Activated CD4-positive, alpha-beta memory T cell treated with anti-CD3 and anti-CD28 coated beads for 36 hours (primary cell): ENCODE measurements at regions of chr20 and their contacts with region 1.

Region 1: GRCh38 chr20:58192567-58192966 is 35.9 kb downstream of the ANKRD60 start:
- DNase-seq: peak; percentile 49
- H3K4me3 Mint-ChIP-seq: no peak overlapping the region
- H3K27ac Mint-ChIP-seq: no peak overlapping the region
- H3K4me1 Mint-ChIP-seq: no peaks in the 10 kb centered on the region
- H3K27me3 Mint-ChIP-seq: peaks cover 11% of the 10 kb centered on the region

Region 2: GRCh38 chr20:58209652-58210397 is 17.3 kb after region 1 on chr20:
- CTCF ChIA-PET with region 1: interaction called, 20 read pairs
- POLR2A ChIA-PET with region 1: no interaction called
- intact Hi-C with region 1: loop called (anchors 1 kb)
- DNase-seq: peak; percentile 89
- H3K4me3 Mint-ChIP-seq: no peak overlapping the region
- H3K27ac Mint-ChIP-seq: no peak overlapping the region
- H3K4me1 Mint-ChIP-seq: no peaks in the 10 kb centered on the region
- H3K27me3 Mint-ChIP-seq: peaks cover 3% of the 10 kb centered on the region

Region 3: DNA sequence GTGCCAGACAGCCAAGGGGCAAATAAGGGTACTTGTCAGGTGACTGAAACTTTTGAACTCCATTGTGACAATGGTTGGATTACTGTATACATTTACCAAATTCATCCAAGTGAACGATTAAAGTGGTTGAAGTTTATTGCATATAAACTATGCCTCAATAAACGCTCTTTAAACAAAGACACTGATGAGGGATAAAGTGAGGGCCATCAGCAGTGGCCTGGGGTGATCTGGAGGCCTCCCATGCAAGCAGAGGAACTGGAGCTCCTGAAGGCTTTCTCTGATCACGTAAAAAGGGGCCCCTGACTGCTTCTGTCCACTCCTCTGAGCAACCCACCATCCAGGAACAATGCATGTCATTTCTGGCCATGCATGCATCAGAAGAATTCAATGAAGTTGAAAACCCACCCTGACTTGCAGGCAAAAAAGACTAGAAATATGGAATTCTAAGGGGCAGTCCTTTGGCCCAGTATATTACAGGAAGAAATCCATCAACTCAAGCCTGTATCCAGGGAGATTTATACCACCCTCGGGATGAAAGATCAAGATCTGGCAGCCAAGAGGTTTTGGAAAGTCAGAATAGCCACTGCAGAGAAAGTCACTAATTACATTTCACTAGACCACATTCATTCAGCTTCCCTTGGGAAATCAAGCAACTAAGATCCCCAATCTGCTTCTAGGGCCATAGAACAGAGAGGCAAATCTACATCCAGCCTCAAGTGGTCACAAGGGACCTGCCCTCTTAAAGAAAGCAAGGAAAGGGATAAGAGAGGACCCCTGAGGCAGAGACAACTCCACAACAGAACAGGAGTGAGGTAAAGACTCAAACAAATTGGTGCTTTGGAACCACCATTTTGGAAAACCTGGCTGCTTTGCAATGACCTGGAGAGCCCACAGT is 85.3 kb after region 1 on chr20:
- CTCF ChIA-PET with region 1: no interaction called
- POLR2A ChIA-PET with region 1: no interaction called
- intact Hi-C with region 1: no loop called
- DNase-seq: no peak
- H3K4me3 Mint-ChIP-seq: no peak overlapping the region
- H3K27ac Mint-ChIP-seq: no peak overlapping the region
- H3K4me1 Mint-ChIP-seq: peaks cover 2% of the 10 kb centered on the region
- H3K27me3 Mint-ChIP-seq: no peaks in the 10 kb centered on the region

Region 4: DNA sequence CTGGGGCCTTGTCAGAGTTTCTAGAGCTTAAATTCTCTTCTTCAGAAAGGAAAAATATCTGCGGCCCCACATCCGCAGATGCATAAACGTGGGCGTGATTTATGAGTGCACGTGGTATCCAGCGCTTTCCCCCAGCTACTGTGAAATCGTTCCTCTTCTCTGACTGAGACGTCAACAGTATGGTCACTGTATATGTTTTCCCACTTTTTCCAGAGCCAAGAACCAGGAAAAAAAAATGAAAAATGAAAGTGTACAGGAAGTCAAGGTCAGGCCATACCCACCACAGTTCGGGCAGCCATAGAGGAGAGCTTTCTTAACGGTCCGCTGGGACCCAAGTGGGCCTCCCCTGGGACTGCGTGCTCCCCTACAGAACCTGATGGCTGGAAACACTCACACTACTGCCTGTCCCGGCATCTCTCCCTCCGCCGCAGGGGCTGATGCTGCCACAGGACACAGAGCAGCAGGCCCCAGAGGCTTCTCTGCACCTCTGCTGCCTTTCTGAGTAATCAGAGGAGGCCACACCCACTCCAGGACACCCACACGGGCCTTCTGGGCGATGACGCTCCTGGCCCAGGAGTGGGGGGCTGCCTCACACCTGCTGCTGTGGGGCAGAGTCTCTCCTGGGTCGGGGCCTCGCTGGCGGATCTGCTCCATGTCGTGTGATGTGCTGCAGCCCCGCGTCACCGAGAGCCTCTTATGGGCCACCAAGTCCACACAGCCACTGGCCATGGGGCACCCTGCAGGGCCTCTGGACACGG is 442.1 kb after region 1 on chr20:
- CTCF ChIA-PET with region 1: no interaction called
- POLR2A ChIA-PET with region 1: no interaction called
- intact Hi-C with region 1: no loop called
- DNase-seq: peak; percentile 69
- H3K4me3 Mint-ChIP-seq: peak overlapping the region; percentile 23
- H3K27ac Mint-ChIP-seq: peak overlapping the region; percentile 71
- H3K4me1 Mint-ChIP-seq: peaks cover 17% of the 10 kb centered on the region
- H3K27me3 Mint-ChIP-seq: peaks cover 8% of the 10 kb centered on the region